Vagina (tissue), 2 donors: ENCODE measurements at regions of chr13 and their contacts with region 1.

Region 1: GRCh38 chr13:33132644-33133440 is 116.6 kb downstream of the KL start:
- DNase-seq: no peak
- H3K4me3 ChIP-seq: no peak overlapping the region
- H3K27ac ChIP-seq: peak overlapping the region; percentile 71
- H3K4me1 ChIP-seq: peaks cover 14% of the 10 kb centered on the region
- H3K27me3 ChIP-seq: no peaks in the 10 kb centered on the region
- CTCF ChIP-seq: no peak
- POLR2A ChIP-seq: no peak

Region 2: DNA sequence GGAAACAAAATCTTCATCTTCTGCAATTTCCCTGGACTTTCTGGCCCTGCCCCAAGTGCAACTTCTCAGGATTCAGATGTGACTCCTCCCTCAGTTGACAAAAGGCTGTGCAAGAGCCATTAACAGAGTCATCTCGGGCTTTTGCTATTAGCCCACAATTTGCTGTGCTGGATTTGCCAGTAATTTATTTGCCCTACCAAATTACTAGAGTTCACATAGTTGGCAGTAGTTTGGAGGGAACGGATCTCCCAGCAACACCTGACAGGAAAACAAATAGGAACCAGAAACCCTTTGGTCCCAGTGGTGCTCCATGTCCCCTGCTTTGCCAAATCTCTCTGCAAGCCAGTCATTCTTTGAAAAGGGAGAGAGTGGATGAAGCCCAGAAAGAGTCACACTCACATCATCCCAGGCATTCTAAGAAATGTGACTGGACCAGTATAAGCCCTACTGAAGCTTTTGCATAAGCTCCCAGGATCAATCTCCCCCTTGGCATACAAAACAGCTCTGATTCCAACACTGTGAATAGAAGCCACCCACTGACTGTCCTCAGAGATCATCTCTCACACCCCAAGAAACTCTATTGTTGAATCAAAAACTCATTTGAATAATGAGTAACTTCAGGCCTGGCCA is 1459.2 kb after region 1 on chr13:
- intact Hi-C with region 1: loop called (anchors 5 kb)
- DNase-seq: no peak
- H3K4me3 ChIP-seq: no peak overlapping the region
- H3K27ac ChIP-seq: no peak overlapping the region
- H3K4me1 ChIP-seq: no peaks in the 10 kb centered on the region
- H3K27me3 ChIP-seq: no peaks in the 10 kb centered on the region
- CTCF ChIP-seq: no peak
- POLR2A ChIP-seq: no peak